Activated CD4-positive, alpha-beta T cell treated with anti-CD3 and anti-CD28 coated beads, Interleukin-2, amount 10 ng/mL, durations not matched to agents 24 days and 14 days (primary cell): ENCODE measurements at regions of chr1 and their contacts with region 1.

Region 1: DNA sequence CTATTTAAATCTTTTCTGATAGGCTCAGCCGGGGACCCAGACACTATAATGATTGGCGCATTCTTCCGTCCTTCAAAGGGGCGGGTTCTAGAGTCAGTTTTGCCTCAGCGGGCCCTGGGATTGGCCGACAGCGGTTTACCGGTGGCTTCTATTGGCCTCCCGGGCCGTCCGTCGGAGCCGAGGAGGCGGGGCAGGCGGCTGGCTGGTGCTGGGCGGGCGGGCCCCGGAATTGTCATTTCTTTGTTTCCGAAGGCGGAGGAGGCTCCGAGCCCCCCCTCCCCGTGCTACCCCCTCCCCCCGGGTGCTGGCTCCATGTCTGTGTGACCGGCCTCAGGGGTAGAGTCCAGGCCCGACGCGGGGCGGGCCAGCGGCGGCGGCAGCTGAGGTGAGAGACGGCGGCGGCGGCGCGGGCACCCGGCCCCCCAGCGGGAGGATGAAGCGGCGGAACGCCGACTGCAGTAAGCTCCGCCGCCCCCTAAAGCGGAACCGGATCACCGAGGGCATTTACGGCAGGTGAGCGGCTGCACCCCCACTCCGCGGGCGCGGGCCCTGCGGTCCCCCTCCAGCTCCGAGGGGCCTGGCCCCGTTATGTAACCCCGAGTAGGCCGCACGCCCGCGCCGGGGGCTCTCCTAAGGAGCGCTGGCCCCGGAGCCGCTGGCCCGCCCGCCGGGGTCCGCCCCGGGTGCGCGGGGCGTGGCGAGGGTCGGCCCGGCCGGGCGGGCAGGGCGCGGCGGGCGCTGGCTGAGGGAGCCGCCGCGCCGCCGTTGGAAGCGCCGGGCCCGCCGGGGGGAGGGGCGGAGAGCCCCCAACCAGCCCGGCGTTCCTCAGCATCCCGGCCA is at the start of gene MACO1:
- DNase-seq: peak; percentile 99
- H3K4me3 Mint-ChIP-seq: peak within 1 kb of the TSS; percentile 91
- H3K27ac Mint-ChIP-seq: peak within 1 kb of the TSS; percentile 98
- H3K4me1 Mint-ChIP-seq: peaks cover 49% of the 10 kb centered on the region
- H3K27me3 Mint-ChIP-seq: no peaks in the 10 kb centered on the region
- total RNA-seq, gene MACO1: 14.3 and 15.3 TPM in 2 replicates

Region 2: GRCh38 chr1:25239681-25240541 is 191.0 kb before region 1 on chr1:
- intact Hi-C with region 1: loop called (anchors 1 kb)
- DNase-seq: peak; percentile 97
- H3K4me3 Mint-ChIP-seq: peak overlapping the region; percentile 91
- H3K27ac Mint-ChIP-seq: peak overlapping the region; percentile 98
- H3K4me1 Mint-ChIP-seq: peaks cover 48% of the 10 kb centered on the region
- H3K27me3 Mint-ChIP-seq: no peaks in the 10 kb centered on the region

Region 3: GRCh38 chr1:25247024-25247828 is 183.7 kb before region 1 on chr1 and contains the start of gene RSRP1:
- intact Hi-C with region 1: loop called (anchors 2 kb)
- DNase-seq: peak; percentile 100
- H3K4me3 Mint-ChIP-seq: peak within 1 kb of the TSS; percentile 97
- H3K27ac Mint-ChIP-seq: peak within 1 kb of the TSS; percentile 99
- H3K4me1 Mint-ChIP-seq: peaks cover 42% of the 10 kb centered on the region
- H3K27me3 Mint-ChIP-seq: peaks cover 7% of the 10 kb centered on the region
- total RNA-seq, gene RSRP1: 117 and 118 TPM in 2 replicates

Region 4: GRCh38 chr1:25447547-25447946 is 16.7 kb after region 1 on chr1:
- intact Hi-C with region 1: loop called (anchors 2 kb)
- DNase-seq: peak; percentile 77
- H3K4me3 Mint-ChIP-seq: peak overlapping the region; percentile 37
- H3K27ac Mint-ChIP-seq: peak overlapping the region; percentile 34
- H3K4me1 Mint-ChIP-seq: peaks cover 24% of the 10 kb centered on the region
- H3K27me3 Mint-ChIP-seq: no peaks in the 10 kb centered on the region

Region 5: GRCh38 chr1:25469177-25469576 is 38.3 kb after region 1 on chr1:
- intact Hi-C with region 1: loop called (anchors 5 kb)
- DNase-seq: no peak
- H3K4me3 Mint-ChIP-seq: no peak overlapping the region
- H3K27ac Mint-ChIP-seq: no peak overlapping the region
- H3K4me1 Mint-ChIP-seq: peaks cover 44% of the 10 kb centered on the region
- H3K27me3 Mint-ChIP-seq: no peaks in the 10 kb centered on the region

Region 6: DNA sequence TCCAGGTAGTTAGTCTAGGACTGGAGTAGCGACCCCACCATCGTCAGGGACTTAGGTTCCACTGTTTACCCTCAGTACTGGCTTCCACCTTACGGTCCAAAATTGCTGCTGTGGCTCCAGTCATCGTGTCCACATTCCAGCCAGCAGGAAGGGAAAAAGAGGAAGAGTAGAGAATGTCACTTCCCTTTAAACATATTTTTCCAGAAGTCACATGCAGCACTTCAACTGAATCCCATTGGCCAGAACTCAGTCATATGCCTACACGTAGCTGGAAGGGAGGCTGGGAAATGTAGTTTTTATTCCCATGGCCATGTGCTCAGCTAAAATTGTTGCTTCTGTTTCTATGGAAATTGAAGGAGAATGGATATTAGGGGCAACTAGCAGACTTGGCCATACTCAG is 285.0 kb after region 1 on chr1:
- intact Hi-C with region 1: no loop called
- DNase-seq: no peak
- H3K4me3 Mint-ChIP-seq: no peak overlapping the region
- H3K27ac Mint-ChIP-seq: no peak overlapping the region
- H3K4me1 Mint-ChIP-seq: peaks cover 11% of the 10 kb centered on the region
- H3K27me3 Mint-ChIP-seq: peaks cover 17% of the 10 kb centered on the region